Right cardiac atrium (tissue), 5 donors: ENCODE measurements at regions of chr1 and their contacts with region 1.

Region 1: GRCh38 chr1:94926915-94927404 is at the start of gene CNN3:
- DNase-seq: peak; percentile 94 to 97 (median 97)
- ATAC-seq: peak; percentile 95 to 96
- H3K4me3 ChIP-seq: peak within 1 kb of the TSS; percentile 96
- H3K27ac ChIP-seq: peak within 1 kb of the TSS; percentile 99
- H3K4me1 ChIP-seq: peaks cover 15% of the 10 kb centered on the region
- H3K27me3 ChIP-seq: no peaks in the 10 kb centered on the region
- total RNA-seq, gene CNN3: 105 to 162 (median 112) TPM

Region 2: GRCh38 chr1:94438692-94439276 is 488.2 kb before region 1 on chr1:
- intact Hi-C with region 1: no loop called
- DNase-seq: no peak
- ATAC-seq: no peak
- H3K4me3 ChIP-seq: no peak overlapping the region
- H3K27ac ChIP-seq: no peak overlapping the region
- H3K4me1 ChIP-seq: peaks cover 1% of the 10 kb centered on the region
- H3K27me3 ChIP-seq: no peaks in the 10 kb centered on the region

Region 3: DNA sequence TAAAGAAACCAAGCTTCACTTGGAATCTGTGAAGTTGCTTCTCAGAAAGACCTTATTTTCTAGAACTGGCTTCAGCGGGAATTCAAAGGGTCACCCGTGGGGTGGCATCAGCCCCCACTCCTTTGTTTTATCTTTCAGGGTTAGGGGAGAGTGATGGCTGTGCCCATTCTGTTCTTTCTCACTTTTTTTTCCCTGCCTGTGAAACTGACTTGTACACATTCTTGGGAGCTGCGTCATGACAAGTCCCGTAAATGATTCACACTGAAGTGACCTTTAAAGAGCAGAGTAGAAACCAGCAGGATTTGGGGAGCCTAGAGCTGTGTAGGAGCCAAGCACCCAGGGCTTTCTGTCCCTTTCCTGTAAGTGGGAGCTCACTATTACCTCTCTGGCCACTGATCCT is 63.0 kb before region 1 on chr1:
- intact Hi-C with region 1: loop called in 3 of 4 experiments (anchors 5 to 10 kb)
- DNase-seq: peak in 1 of 3 donors; percentile 59
- ATAC-seq: peak; percentile 86 to 94
- H3K4me3 ChIP-seq: no peak overlapping the region
- H3K27ac ChIP-seq: peak overlapping the region; percentile 43
- H3K4me1 ChIP-seq: peaks cover 17% of the 10 kb centered on the region
- H3K27me3 ChIP-seq: no peaks in the 10 kb centered on the region

Region 4: DNA sequence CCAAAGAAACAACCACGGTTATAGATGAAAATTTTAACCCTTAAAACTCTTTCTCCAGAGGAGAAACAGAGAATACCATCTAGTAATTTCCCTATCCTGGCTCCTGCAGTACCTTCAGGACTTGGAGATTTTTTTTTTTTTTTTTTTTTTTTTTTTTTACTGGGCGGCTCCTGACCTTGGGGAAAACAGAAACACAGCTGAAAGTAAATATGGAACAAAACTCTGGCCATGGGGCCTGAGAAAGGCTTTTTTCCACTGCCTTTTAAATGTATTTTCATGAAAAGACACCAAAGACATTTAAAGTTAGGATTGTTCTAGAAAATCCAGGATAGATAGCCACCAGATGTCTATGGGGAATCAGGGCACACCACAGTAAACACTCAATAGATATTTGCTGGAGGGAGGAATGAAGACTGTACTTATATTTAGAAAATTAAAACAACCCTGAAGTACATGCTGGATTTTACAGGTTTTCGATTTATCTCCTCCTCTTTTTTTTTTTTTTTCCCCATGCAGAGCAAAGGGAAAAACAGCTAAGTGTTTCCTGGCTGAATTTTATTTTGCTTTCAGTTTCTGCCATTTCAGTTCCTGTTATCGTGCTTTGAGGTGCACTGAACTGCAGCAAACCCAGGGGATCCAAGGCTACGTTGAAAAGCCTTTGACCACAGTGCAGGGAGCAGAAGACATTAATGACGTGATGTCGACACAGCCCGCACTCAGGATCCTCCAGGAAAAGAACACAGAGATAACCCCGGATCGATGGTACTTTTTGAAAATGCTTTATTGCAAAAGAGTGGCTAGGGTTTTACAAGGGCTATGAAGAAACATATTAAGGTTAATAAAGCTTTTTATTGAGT is 35.7 kb after region 1 on chr1:
- intact Hi-C with region 1: loop called in 1 of 4 experiments (anchors 5 kb)
- DNase-seq: peak in 2 of 3 donors; percentile 30 to 63
- ATAC-seq: peak; percentile 74 to 81
- H3K4me3 ChIP-seq: peak overlapping the region; percentile 49
- H3K27ac ChIP-seq: peak overlapping the region; percentile 82
- H3K4me1 ChIP-seq: peaks cover 3% of the 10 kb centered on the region
- H3K27me3 ChIP-seq: no peaks in the 10 kb centered on the region

Region 5: GRCh38 chr1:94989911-94990473 is 63.0 kb after region 1 on chr1:
- intact Hi-C with region 1: no loop called
- DNase-seq: peak in 1 of 3 donors; percentile 43
- ATAC-seq: peak; percentile 46 to 75
- H3K4me3 ChIP-seq: no peak overlapping the region
- H3K27ac ChIP-seq: no peak overlapping the region
- H3K4me1 ChIP-seq: peaks cover 9% of the 10 kb centered on the region
- H3K27me3 ChIP-seq: no peaks in the 10 kb centered on the region

Region 6: GRCh38 chr1:95043141-95043980 is 116.4 kb after region 1 on chr1:
- intact Hi-C with region 1: loop called in 3 of 4 experiments (anchors 5 to 10 kb)
- DNase-seq: peak; percentile 81 to 91 (median 87)
- ATAC-seq: peak; percentile 86 to 87
- H3K4me3 ChIP-seq: no peak overlapping the region
- H3K27ac ChIP-seq: peak overlapping the region; percentile 30
- H3K4me1 ChIP-seq: peaks cover 4% of the 10 kb centered on the region
- H3K27me3 ChIP-seq: no peaks in the 10 kb centered on the region